ENCODE measurements at regions of chr11 and their contacts with region 1.

Region 1: GRCh38 chr11:123478352-123478987 is 48.4 kb downstream of the GRAMD1B start:
- DNase-seq: peak; percentile 77
- ATAC-seq: peak; percentile 91
- H3K4me3 ChIP-seq: no peak overlapping the region
- H3K27ac ChIP-seq: no peak overlapping the region
- H3K4me1 ChIP-seq: peaks cover 5 to 42% of the 10 kb centered on the region in 2 experiments
- H3K27me3 ChIP-seq: no peaks in the 10 kb centered on the region
- CTCF ChIP-seq: peak; percentile 45 to 98 (median 83)
- POLR2A ChIP-seq: no peak
- RAD21 ChIP-seq: peak; percentile 97

Region 2: GRCh38 chr11:123103326-123103980 is 375.0 kb before region 1 on chr11:
- CTCF ChIA-PET with region 1: interaction called, 8 read pairs
- POLR2A ChIA-PET with region 1: no interaction called
- RAD21 ChIA-PET with region 1: no interaction called
- intact Hi-C with region 1: loop called (anchors 2 kb)
- DNase-seq: peak; percentile 60
- ATAC-seq: peak; percentile 81
- H3K4me3 ChIP-seq: no peak overlapping the region
- H3K27ac ChIP-seq: no peak overlapping the region
- H3K4me1 ChIP-seq: peaks cover 0 to 6% of the 10 kb centered on the region in 2 experiments; a peak in 3 of 4 replicates
- H3K27me3 ChIP-seq: no peaks in the 10 kb centered on the region
- CTCF ChIP-seq: peak; percentile 70 to 76 (median 75)
- POLR2A ChIP-seq: no peak
- RAD21 ChIP-seq: peak; percentile 84

Region 3: GRCh38 chr11:123110356-123110755 is 368.1 kb before region 1 on chr11:
- CTCF ChIA-PET with region 1: interaction called, 3 read pairs
- POLR2A ChIA-PET with region 1: no interaction called
- RAD21 ChIA-PET with region 1: no interaction called
- intact Hi-C with region 1: loop called (anchors 2 kb)
- DNase-seq: no peak
- ATAC-seq: no peak
- H3K4me3 ChIP-seq: no peak overlapping the region
- H3K27ac ChIP-seq: no peak overlapping the region
- H3K4me1 ChIP-seq: peaks cover 0 to 3% of the 10 kb centered on the region in 2 experiments; a peak in 2 of 4 replicates
- H3K27me3 ChIP-seq: no peaks in the 10 kb centered on the region
- CTCF ChIP-seq: no peak
- POLR2A ChIP-seq: no peak
- RAD21 ChIP-seq: no peak

Region 4: DNA sequence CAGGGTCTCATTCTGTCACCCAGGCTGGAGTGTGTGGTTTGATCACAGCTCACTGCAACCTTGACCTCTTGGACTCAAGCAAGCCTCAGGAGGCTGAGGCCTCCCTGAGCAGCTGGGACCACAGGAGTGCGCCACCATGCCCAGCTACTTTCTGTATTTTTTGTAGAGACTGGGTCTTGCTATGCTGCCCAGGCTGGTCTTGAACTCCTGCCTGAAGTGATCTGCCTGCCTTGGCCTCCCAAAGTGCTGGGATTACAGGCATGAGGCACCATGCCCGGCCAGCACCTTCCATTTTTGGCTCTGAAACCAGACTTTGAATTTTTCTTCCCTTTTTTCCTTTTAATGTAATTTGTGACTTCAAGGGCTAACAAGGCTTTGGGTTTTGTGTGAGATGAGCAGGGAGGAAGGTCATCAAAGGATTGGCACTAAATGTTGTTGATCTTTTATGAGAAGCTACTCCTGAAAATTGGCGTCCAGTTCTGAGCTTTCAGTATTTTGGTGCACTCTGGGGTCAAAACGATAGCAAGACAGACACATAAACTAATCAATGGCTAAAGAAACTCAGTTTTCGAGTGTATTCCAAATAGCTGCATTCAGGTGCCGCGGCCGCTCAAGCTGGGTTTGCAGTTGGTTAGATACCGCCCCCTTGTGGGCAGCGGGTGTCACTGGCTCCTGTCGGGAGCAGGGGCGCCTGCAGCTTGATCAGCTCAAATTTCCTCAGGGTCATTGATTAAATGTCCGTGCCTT is 231.5 kb before region 1 on chr11:
- CTCF ChIA-PET with region 1: interaction called, 15 read pairs
- POLR2A ChIA-PET with region 1: no interaction called
- RAD21 ChIA-PET with region 1: no interaction called
- intact Hi-C with region 1: no loop called
- DNase-seq: peak; percentile 55
- ATAC-seq: peak; percentile 96
- H3K4me3 ChIP-seq: no peak overlapping the region; a peak in 1 of 4 replicates
- H3K27ac ChIP-seq: no peak overlapping the region
- H3K4me1 ChIP-seq: peaks cover 0 to 15% of the 10 kb centered on the region in 2 experiments; a peak in 2 of 4 replicates
- H3K27me3 ChIP-seq: no peaks in the 10 kb centered on the region
- CTCF ChIP-seq: peak; percentile 93 to 98 (median 97)
- POLR2A ChIP-seq: no peak
- RAD21 ChIP-seq: peak; percentile 93

Region 5: GRCh38 chr11:123261345-123262106 is 216.9 kb before region 1 on chr11:
- CTCF ChIA-PET with region 1: interaction called, 18 read pairs
- POLR2A ChIA-PET with region 1: no interaction called
- RAD21 ChIA-PET with region 1: interaction called in 1 of 2 experiments, 4 read pairs
- intact Hi-C with region 1: no loop called
- DNase-seq: peak; percentile 62
- ATAC-seq: peak; percentile 100
- H3K4me3 ChIP-seq: peak overlapping the region in 1 of 2 experiments; percentile 18; a peak in 1 of 4 replicates
- H3K27ac ChIP-seq: no peak overlapping the region
- H3K4me1 ChIP-seq: peaks cover 0 to 5% of the 10 kb centered on the region in 2 experiments; a peak in 2 of 4 replicates
- H3K27me3 ChIP-seq: peaks cover 10% of the 10 kb centered on the region; the same call in 1 of the 2 replicates
- CTCF ChIP-seq: peak; percentile 85 to 98 (median 96)
- POLR2A ChIP-seq: no peak
- RAD21 ChIP-seq: peak; percentile 77

Region 6: DNA sequence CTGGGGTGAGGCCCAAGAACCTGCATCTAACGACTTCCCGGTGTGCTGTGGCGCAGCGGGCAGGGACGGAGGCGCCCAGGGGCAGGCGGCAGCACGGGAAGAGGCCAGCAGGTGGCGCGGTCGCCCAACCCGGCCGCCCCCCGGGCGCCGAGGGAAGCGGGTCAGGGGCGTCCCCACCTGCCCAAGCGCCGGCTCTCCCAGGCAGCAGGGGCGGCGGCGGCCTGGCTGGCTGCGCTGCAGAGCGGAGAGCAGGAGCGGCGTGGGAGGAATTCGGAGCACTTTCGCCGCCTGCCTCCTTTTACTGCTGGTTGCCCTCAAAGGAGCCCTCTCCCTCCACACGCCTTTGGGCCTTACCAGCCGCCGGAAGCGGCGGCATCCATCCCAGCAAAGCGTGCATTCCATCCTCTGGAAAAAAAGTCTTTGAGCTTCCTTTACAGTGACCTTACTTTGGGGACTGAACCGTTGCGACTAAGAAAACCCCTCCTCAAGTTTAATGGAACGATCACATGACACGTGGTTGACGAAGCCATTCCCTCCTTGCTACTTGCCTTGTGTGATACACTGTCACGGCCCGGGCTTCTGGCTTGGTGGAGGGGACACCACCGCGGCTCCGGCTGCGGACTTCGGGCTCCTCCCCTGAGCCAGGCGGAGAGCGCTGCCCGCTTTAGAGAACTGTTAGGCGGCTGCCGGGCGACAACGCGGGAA is 176.6 kb before region 1 on chr11:
- CTCF ChIA-PET with region 1: interaction called, 4 read pairs
- POLR2A ChIA-PET with region 1: no interaction called
- RAD21 ChIA-PET with region 1: no interaction called
- intact Hi-C with region 1: loop called (anchors 1 kb)
- DNase-seq: peak; percentile 18
- ATAC-seq: peak; percentile 95
- H3K4me3 ChIP-seq: peak overlapping the region; percentile 9 to 14; a peak in 3 of 4 replicates
- H3K27ac ChIP-seq: no peak overlapping the region
- H3K4me1 ChIP-seq: peaks cover 2 to 15% of the 10 kb centered on the region in 2 experiments; a peak in 2 of 4 replicates
- H3K27me3 ChIP-seq: no peaks in the 10 kb centered on the region
- CTCF ChIP-seq: peak; percentile 53 to 89 (median 76); a peak in 5 of 6 replicates
- POLR2A ChIP-seq: no peak
- RAD21 ChIP-seq: peak; percentile 76

Region 7: GRCh38 chr11:123407130-123407995 is 71.1 kb before region 1 on chr11:
- CTCF ChIA-PET with region 1: interaction called, 203 read pairs
- POLR2A ChIA-PET with region 1: interaction called, 5 read pairs
- RAD21 ChIA-PET with region 1: interaction called, 19 to 23 read pairs
- intact Hi-C with region 1: loop called (anchors 1 kb)
- DNase-seq: peak; percentile 74
- ATAC-seq: peak; percentile 97
- H3K4me3 ChIP-seq: no peak overlapping the region
- H3K27ac ChIP-seq: no peak overlapping the region
- H3K4me1 ChIP-seq: no peaks in the 10 kb centered on the region
- H3K27me3 ChIP-seq: 0 out of 2 replicates have a peak, but pooled peaks cover 9% of the 10 kb centered on the region
- CTCF ChIP-seq: peak; percentile 85 to 95 (median 88)
- POLR2A ChIP-seq: no peak
- RAD21 ChIP-seq: peak; percentile 95